Transverse colon (tissue), 4 donors: ENCODE measurements at regions of chr1 and their contacts with region 1.

Region 1: GRCh38 chr1:19651141-19651737 is 7.1 kb downstream of the NBL1 start:
- DNase-seq: peak; percentile 43
- H3K4me3 ChIP-seq: peak overlapping the region in 1 of 4 donors; percentile 23
- H3K27ac ChIP-seq: peak overlapping the region; percentile 71 to 98 (median 94)
- H3K4me1 ChIP-seq: peaks cover 26 to 73% (median 57%) of the 10 kb centered on the region in 4 donors
- H3K27me3 ChIP-seq: no peaks in the 10 kb centered on the region
- CTCF ChIP-seq: peak; percentile 40 to 53 (median 49)
- EP300 ChIP-seq: no peak
- POLR2A ChIP-seq: no peak

Region 2: GRCh38 chr1:19341201-19342072 is 309.8 kb before region 1 on chr1:
- in situ Hi-C with region 1: loop called in 3 of 4 experiments (anchors 5 to 10 kb)
- intact Hi-C with region 1: loop called (anchors 2 kb)
- DNase-seq: peak; percentile 80
- H3K4me3 ChIP-seq: no peak overlapping the region
- H3K27ac ChIP-seq: peak overlapping the region in 1 of 4 donors; percentile 52
- H3K4me1 ChIP-seq: peaks cover 0 to 7% (median 2%) of the 10 kb centered on the region in 4 donors
- H3K27me3 ChIP-seq: no peaks in the 10 kb centered on the region
- CTCF ChIP-seq: peak; percentile 88 to 92 (median 91)
- EP300 ChIP-seq: no peak
- POLR2A ChIP-seq: no peak

Region 3: GRCh38 chr1:19353596-19353995 is 297.6 kb before region 1 on chr1:
- in situ Hi-C with region 1: loop called in 3 of 4 experiments (anchors 10 kb)
- intact Hi-C with region 1: no loop called
- DNase-seq: no peak
- H3K4me3 ChIP-seq: no peak overlapping the region
- H3K27ac ChIP-seq: peak overlapping the region in 3 of 4 donors; percentile 0 to 76 (median 49)
- H3K4me1 ChIP-seq: peaks cover 0 to 12% (median 7%) of the 10 kb centered on the region in 4 donors
- H3K27me3 ChIP-seq: no peaks in the 10 kb centered on the region
- CTCF ChIP-seq: no peak
- EP300 ChIP-seq: no peak
- POLR2A ChIP-seq: no peak

Region 4: DNA sequence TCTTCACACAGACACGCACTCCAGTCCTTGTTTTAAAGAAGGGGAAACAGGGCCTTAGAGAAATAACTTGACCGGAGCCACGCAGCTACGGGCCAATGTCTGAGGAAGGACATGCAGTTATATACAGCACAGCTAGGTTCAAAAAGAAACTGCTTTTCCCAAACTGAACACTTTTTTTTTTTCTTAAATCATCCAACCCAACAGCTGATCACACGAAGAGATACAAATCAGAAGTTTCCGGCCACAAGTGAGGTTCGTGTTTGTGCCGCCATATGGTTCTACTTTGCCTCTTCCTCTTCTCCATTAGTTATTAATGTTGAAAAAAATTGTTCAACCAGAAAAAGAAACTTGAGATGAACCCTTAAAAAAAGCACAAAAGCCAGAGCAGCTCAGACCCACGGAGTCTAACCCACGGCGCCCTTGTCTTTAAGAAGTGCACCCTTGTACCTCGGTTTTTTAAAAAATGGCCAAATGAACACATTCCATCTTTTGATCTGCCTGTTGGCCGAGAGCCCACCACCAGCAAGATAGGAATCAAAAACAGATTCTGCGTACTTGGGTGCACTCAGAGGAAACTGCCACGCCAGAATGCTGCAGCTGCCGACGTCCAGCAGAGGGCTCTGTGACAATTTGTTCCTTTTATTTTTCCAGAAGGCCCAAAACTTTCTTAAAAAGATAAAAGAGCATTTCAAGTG is 260.2 kb before region 1 on chr1:
- in situ Hi-C with region 1: no loop called
- intact Hi-C with region 1: loop called (anchors 2 kb)
- DNase-seq: peak; percentile 71
- H3K4me3 ChIP-seq: no peak overlapping the region
- H3K27ac ChIP-seq: peak overlapping the region; percentile 69 to 85 (median 77)
- H3K4me1 ChIP-seq: peaks cover 44 to 75% (median 50%) of the 10 kb centered on the region in 4 donors
- H3K27me3 ChIP-seq: no peaks in the 10 kb centered on the region
- CTCF ChIP-seq: peak; percentile 78 to 87 (median 80)
- EP300 ChIP-seq: no peak
- POLR2A ChIP-seq: no peak

Region 5: DNA sequence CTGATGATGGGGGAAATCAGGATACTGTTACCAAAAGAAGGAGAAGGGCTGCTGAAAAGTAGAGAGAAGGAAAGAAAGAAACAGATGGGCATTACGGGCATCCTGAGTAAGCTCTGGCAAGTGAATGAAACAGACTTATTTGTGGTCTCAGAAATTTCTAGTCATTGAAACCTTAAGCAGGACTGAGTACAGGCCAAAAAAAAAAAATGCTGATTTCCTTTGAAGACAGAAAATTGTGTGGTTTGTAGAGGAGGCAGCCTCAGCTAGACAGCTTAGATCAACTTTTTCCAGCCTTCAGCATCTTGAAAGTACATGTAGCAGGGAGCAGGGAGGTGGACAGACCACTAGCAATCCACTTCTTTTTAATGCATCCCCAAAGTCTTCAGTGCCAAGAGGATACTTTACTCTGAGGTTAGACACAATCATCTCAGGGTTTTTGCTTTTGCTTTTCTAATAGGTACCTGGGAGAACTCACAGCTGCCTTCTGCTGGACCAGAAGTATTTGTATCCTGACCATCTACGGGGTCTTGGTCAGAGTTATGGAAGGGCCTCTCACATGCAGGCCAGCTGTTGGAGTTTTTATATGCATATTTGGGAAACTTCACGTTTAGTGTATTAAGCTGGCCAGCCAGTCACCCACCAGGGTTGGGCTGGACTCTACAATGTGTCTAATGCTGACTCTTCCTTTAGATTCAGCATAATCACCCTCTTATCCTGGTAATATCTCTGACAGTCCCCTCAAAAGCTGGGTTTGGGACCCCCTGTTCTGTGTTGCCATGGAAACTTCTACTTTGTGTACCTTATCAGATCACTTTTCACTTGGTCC is 155.2 kb before region 1 on chr1:
- in situ Hi-C with region 1: loop called in 2 of 4 experiments (anchors 10 to 25 kb)
- intact Hi-C with region 1: no loop called
- DNase-seq: no peak
- H3K4me3 ChIP-seq: no peak overlapping the region
- H3K27ac ChIP-seq: peak overlapping the region; percentile 36 to 52 (median 46)
- H3K4me1 ChIP-seq: peaks cover 0 to 12% (median 0%) of the 10 kb centered on the region in 4 donors
- H3K27me3 ChIP-seq: no peaks in the 10 kb centered on the region
- CTCF ChIP-seq: no peak
- EP300 ChIP-seq: no peak
- POLR2A ChIP-seq: no peak